ENCODE measurements at regions of chr10 and their contacts with region 1.

Region 1: GRCh38 chr10:93548376-93549071 is 17.9 kb upstream of the FFAR4 start:
- DNase-seq: peak; percentile 22
- H3K4me3 Mint-ChIP-seq: no peak overlapping the region
- H3K27ac Mint-ChIP-seq: peak overlapping the region; percentile 70
- H3K4me1 Mint-ChIP-seq: peaks cover 20% of the 10 kb centered on the region
- H3K27me3 Mint-ChIP-seq: no peaks in the 10 kb centered on the region
- CTCF ChIP-seq: no peak

Region 2: GRCh38 chr10:93512565-93512964 is 36.0 kb before region 1 on chr10:
- CTCF ChIA-PET with region 1: interaction called, 10 read pairs
- intact Hi-C with region 1: no loop called
- DNase-seq: no peak
- H3K4me3 Mint-ChIP-seq: no peak overlapping the region
- H3K27ac Mint-ChIP-seq: no peak overlapping the region
- H3K4me1 Mint-ChIP-seq: no peaks in the 10 kb centered on the region
- H3K27me3 Mint-ChIP-seq: no peaks in the 10 kb centered on the region
- CTCF ChIP-seq: no peak

Measured in Calu3 (cell line).